Lower leg skin (tissue), 4 donors: ENCODE measurements at regions of chr17 and their contacts with region 1.

Region 1: GRCh38 chr17:17815436-17816200 is 21.2 kb downstream of the SREBF1 start:
- DNase-seq: no peak
- H3K4me3 ChIP-seq: no peak overlapping the region
- CTCF ChIP-seq: no peak
- POLR2A ChIP-seq: no peak

Region 2: GRCh38 chr17:17859909-17860765 is 44.5 kb after region 1 on chr17:
- intact Hi-C with region 1: loop called (anchors 2 kb)
- DNase-seq: peak in 1 of 2 donors; percentile 92
- H3K4me3 ChIP-seq: no peak overlapping the region
- CTCF ChIP-seq: peak in 1 of 3 donors; percentile 79
- POLR2A ChIP-seq: no peak

Region 3: GRCh38 chr17:18056212-18056611 is 240.6 kb after region 1 on chr17:
- intact Hi-C with region 1: no loop called
- DNase-seq: no peak
- H3K4me3 ChIP-seq: no peak overlapping the region
- CTCF ChIP-seq: no peak
- POLR2A ChIP-seq: no peak